ENCODE measurements at regions of chr17 and their contacts with region 1.

Region 1: DNA sequence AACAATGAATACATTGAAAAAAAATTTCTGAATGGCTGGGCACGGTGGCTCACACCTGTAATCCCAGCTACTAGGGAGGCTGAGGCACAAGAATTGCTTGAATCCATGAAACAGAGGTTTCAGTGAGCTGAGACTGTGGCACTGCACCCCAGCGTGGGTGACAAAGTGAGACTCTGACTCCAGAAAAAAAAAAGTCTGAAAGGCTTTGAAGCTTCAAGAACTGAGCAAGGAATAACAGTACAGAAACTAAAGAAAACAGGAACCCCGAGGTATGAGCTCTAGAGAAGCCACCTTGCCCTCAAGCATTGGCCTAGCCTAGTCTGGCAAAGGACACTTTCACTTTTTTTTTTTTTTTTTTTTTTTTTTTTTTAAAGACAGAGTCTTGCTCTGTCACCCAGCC is 45.0 kb downstream of the TEX2 start:
- DNase-seq: no peak
- ATAC-seq: no peak
- H3K4me3 ChIP-seq: no peak overlapping the region
- H3K27ac ChIP-seq: no peak overlapping the region
- H3K4me1 ChIP-seq: peaks cover 6% of the 10 kb centered on the region
- H3K27me3 ChIP-seq: no peaks in the 10 kb centered on the region
- CTCF ChIP-seq: no peak

Region 2: DNA sequence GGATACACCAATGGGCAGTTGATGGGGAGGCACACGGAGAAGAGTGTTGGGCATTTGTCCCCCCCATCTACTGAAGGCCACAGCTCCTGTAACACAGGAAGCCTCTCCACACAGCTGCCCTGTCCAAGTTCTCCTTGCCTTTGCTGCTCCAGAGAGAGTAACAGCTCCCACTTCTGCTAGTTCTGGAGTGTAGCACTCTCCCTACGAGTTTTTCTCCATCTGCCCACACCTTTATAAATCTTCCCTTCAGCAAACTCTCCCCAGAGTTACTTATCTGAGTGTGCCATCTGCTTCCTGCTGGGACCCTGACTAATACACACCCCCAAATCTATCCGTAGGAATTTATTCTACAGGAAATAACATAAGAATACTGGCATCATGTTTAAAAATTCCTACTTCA is 45.6 kb before region 1 on chr17:
- CTCF ChIA-PET with region 1: no interaction called
- POLR2A ChIA-PET with region 1: interaction called, 40 read pairs
- intact Hi-C with region 1: no loop called
- DNase-seq: no peak
- ATAC-seq: no peak
- H3K4me3 ChIP-seq: no peak overlapping the region
- H3K27ac ChIP-seq: no peak overlapping the region
- H3K4me1 ChIP-seq: peaks cover 9% of the 10 kb centered on the region
- H3K27me3 ChIP-seq: no peaks in the 10 kb centered on the region
- CTCF ChIP-seq: no peak

Region 3: GRCh38 chr17:64256913-64257807 is 39.1 kb after region 1 on chr17:
- CTCF ChIA-PET with region 1: no interaction called
- POLR2A ChIA-PET with region 1: no interaction called
- intact Hi-C with region 1: no loop called
- DNase-seq: no peak
- ATAC-seq: no peak
- H3K4me3 ChIP-seq: no peak overlapping the region
- H3K27ac ChIP-seq: no peak overlapping the region
- H3K4me1 ChIP-seq: peaks cover 30% of the 10 kb centered on the region
- H3K27me3 ChIP-seq: no peaks in the 10 kb centered on the region
- CTCF ChIP-seq: no peak

Measured in PC-3 (cell line).